CD8-positive, alpha-beta T cell (primary cell): ENCODE measurements at regions of chr5 and their contacts with region 1.

Region 1: DNA sequence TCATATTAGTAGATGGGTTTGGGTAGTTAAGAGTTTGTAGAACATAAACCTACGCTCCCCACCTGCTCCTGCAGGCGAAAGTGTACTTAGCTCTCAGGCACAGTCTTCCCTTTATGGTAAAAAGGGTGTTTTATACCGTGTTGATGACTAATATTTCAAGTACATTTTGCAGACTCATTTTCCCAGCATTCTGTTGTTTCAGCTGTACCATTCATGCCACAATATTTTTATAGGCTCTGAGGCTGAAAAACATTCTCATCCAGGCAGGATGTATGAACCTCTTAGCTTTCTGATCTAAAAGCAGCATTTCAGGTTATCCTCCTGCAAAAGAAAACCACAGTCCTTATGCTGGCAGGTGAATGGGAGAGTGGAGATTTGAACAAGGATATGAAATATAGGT is 231.4 kb downstream of the NR2F1-AS1 start:
- DNase-seq: no peak
- ATAC-seq: no peak
- H3K4me3 ChIP-seq: no peak overlapping the region
- H3K4me3 Mint-ChIP-seq: no peak overlapping the region
- H3K27ac ChIP-seq: no peak overlapping the region
- H3K27ac Mint-ChIP-seq: no peak overlapping the region
- H3K4me1 ChIP-seq: no peaks in the 10 kb centered on the region
- H3K4me1 Mint-ChIP-seq: no peaks in the 10 kb centered on the region
- H3K27me3 ChIP-seq: no peaks in the 10 kb centered on the region
- H3K27me3 Mint-ChIP-seq: no peaks in the 10 kb centered on the region
- CTCF ChIP-seq: no peak

Region 2: GRCh38 chr5:93285461-93285860 is 64.2 kb before region 1 on chr5:
- CTCF ChIA-PET with region 1: no interaction called
- POLR2A ChIA-PET with region 1: no interaction called
- intact Hi-C with region 1: loop called in 1 of 2 experiments (anchors 2 kb)
- DNase-seq: no peak
- ATAC-seq: no peak
- H3K4me3 ChIP-seq: no peak overlapping the region
- H3K4me3 Mint-ChIP-seq: no peak overlapping the region
- H3K27ac ChIP-seq: no peak overlapping the region
- H3K27ac Mint-ChIP-seq: no peak overlapping the region
- H3K4me1 ChIP-seq: no peaks in the 10 kb centered on the region
- H3K4me1 Mint-ChIP-seq: no peaks in the 10 kb centered on the region
- H3K27me3 ChIP-seq: no peaks in the 10 kb centered on the region
- H3K27me3 Mint-ChIP-seq: peaks cover 6% of the 10 kb centered on the region
- CTCF ChIP-seq: no peak